ENCODE measurements at regions of chr1 and their contacts with region 1.

Region 1: DNA sequence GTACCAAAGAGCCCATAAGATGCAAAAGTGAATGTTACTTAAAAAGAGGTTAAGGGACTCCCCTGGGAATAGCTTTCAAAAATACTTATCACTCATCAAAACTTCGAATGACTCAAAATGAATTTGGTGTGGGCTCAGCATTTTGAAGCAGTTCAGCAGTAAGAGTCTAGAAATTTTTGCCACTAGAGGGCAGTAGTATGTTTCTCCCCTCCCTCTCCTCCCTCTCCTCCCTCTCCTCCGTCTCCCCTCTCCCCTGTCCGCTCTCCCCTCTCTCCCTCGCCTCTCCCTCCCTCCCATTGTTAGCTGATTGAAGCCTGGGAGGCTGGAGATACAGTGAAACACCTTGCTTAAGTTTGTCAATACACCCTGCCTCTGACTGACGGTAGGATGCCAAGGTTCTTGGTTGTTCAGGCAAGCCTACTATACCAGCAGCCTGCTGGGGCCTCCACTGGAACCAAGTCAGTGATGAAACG is 70.8 kb upstream of the TENT5C start:
- DNase-seq: no peak
- ATAC-seq: peak; percentile 89 to 92
- H3K4me3 ChIP-seq: no peak overlapping the region
- H3K27ac ChIP-seq: no peak overlapping the region
- H3K4me1 ChIP-seq: no peaks in the 10 kb centered on the region
- H3K27me3 ChIP-seq: no peaks in the 10 kb centered on the region
- CTCF ChIP-seq: peak; percentile 61

Region 2: DNA sequence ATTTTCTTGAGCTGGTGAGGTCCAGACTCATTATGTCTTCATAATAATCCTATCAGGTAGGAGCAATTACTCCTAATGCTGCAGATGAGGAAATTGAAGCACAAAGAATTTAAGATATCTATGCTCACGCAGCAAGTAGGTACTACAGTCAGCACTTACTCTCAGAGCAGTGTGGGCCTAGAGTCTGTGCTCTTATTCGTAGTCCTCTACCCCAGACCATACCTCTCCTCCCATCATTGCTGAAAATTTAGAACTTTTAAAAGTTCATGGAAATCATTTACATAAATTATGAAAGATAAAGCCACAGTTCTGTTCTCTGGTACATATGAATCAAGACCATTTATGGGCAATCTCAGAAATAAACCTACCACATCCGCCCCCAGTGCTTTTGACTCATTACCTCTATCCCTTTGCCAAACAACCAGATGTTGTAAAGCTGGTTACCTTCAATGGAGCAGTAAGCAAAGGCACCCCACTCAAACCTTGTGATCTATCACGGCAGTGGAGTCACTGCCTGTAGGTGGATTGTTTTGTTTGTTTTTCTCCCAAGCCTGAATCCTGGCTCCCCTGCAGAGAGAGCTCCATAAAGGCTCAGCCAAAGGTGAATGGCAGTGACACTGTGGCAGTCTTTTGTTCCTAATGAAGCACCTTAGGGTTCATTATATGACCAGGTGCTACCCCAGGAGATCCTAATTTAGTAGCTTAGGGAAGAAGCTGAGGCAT is 188.7 kb before region 1 on chr1:
- intact Hi-C with region 1: no loop called
- DNase-seq: no peak
- ATAC-seq: no peak
- H3K4me3 ChIP-seq: no peak overlapping the region
- H3K27ac ChIP-seq: no peak overlapping the region
- H3K4me1 ChIP-seq: no peaks in the 10 kb centered on the region
- H3K27me3 ChIP-seq: no peaks in the 10 kb centered on the region
- CTCF ChIP-seq: no peak

Region 3: DNA sequence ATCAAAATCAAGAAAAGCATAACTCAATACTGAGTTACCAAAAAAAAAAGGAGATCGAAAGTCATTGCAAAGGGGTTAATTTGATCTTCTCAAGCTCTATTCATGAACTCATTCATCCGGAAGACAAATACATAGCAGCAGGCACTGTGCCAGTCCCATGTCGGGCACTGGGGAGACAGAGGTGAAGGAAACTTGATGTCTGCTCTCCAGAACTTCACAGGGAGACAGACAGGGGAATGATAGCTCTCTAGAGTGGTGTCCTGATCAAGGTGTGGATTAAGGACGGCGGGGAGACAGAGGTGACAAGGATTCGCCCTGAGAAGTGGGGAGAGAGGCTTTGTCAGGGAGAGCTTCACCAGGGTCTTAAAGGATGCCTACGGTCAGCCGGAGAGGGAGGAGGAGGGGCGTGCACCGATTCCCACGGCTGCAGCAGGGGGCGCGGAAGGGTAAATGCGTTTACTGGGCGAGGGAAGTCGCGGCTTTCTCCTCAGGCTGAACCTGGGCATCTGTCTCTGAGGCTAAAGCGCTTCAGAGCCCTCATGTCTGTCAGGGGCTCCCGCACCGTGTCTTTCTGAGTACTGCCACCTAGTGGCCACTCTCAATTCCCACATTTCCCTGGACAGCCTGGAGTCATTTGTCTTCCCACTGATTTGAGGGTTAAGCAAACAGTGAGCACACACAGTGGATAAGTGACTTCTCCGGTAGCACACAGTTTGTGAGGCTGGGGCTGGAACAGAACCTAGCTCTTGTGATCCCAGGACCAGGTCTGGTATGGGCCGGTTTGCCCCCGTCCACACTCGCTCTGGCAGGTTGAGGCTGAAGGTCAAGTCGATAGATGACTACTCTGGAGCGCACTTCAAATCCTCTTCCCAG is 223.6 kb after region 1 on chr1:
- intact Hi-C with region 1: loop called (anchors 10 kb)
- DNase-seq: peak; percentile 58
- ATAC-seq: peak; percentile 93
- H3K4me3 ChIP-seq: peak overlapping the region; percentile 47
- H3K27ac ChIP-seq: no peak overlapping the region
- H3K4me1 ChIP-seq: peaks cover 17% of the 10 kb centered on the region
- H3K27me3 ChIP-seq: peaks cover 10% of the 10 kb centered on the region
- CTCF ChIP-seq: peak; percentile 89

Region 4: DNA sequence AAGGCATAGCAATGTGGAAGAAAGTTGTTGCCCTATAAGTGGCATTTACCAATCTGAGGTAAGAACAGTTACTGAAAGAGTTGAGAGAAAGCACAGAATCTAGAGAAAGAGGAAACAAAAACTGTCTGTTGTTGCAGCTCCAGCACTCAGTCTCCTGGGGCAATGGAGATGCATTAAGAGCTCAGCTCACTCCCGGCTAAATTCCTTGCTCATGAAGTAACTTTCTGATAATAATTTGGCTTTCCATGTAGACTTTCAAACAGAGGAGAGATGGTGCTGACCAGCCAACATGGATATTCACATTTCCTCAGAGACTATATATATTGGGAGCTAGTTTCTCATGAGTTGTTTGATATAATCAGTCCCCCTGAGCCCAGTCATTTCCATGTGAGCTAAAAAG is 259.0 kb after region 1 on chr1:
- intact Hi-C with region 1: no loop called
- DNase-seq: no peak
- ATAC-seq: no peak
- H3K4me3 ChIP-seq: no peak overlapping the region
- H3K27ac ChIP-seq: no peak overlapping the region
- H3K4me1 ChIP-seq: no peaks in the 10 kb centered on the region
- H3K27me3 ChIP-seq: no peaks in the 10 kb centered on the region
- CTCF ChIP-seq: no peak

Measured in lower lobe of right lung (tissue), 2 donors.